ENCODE measurements at regions of chr2 and their contacts with region 1.

Region 1: GRCh38 chr2:234463626-234464290 is 33.1 kb downstream of the ARL4C start:
- DNase-seq: peak; percentile 31 to 86 (median 78)
- ATAC-seq: peak; percentile 86 to 93
- H3K4me3 Mint-ChIP-seq: peak overlapping the region; percentile 58 to 89 (median 84)
- H3K27ac Mint-ChIP-seq: peak overlapping the region; percentile 90 to 99 (median 96)
- H3K4me1 Mint-ChIP-seq: peaks cover 39 to 72% (median 67%) of the 10 kb centered on the region in 4 donors
- H3K27me3 Mint-ChIP-seq: no peaks in the 10 kb centered on the region

Region 2: DNA sequence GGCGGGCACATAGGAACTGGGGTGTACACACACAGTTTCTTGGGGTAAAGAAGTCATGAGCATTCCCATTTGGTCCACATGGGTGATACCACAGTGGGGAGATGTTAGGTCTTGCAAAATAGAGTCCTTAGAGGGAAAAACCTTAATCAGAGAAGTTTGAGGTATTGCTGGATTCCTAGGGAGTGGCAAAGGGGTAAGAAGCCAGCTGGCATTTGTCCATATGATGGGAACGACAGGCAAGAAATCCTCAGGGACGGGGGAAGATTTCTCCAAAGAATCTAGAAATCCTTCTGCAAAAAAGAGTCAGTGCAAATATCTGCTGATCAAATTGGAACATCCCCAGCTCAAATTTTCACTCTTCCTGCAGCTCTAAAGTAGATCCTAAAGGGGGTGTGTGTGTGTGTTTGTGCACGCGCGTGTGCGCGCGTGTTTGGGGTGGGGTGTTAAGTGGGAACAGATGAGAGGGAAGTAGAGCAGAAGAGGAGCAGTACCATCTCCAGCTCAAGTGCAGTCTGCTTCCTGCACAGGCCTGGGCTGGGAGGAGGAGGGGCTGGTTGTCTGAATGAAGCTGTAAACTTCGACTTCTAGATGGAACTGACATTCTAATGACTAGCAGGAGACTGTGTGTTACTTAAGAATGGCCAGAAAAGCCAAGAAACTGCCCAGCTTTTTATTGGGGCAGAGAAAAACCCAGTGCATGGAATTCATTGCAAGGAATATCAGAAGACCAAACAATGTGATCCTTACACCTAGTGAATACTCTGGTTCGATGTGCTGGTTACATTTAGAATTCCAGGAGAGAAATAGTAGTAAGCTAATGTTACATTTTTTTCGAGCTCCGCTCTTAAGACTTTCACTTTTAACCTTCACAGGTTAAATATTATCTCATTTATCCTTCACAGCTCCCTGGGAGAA is 245.2 kb before region 1 on chr2:
- POLR2A ChIA-PET with region 1: interaction called, 10 read pairs
- DNase-seq: peak in 3 of 10 donors; percentile 5 to 18 (median 14)
- ATAC-seq: peak in 1 of 2 donors; percentile 67
- H3K4me3 Mint-ChIP-seq: peak overlapping the region in 8 of 10 donors; percentile 36 to 75 (median 50)
- H3K27ac Mint-ChIP-seq: peak overlapping the region; percentile 17 to 83 (median 64)
- H3K4me1 Mint-ChIP-seq: peaks cover 28 to 47% (median 43%) of the 10 kb centered on the region in 4 donors
- H3K27me3 Mint-ChIP-seq: no peaks in the 10 kb centered on the region

Region 3: GRCh38 chr2:234395891-234396420 is 67.8 kb before region 1 on chr2:
- POLR2A ChIA-PET with region 1: no interaction called
- DNase-seq: no peak
- ATAC-seq: no peak
- H3K4me3 Mint-ChIP-seq: peak overlapping the region in 2 of 10 donors; percentile 22 to 45
- H3K27ac Mint-ChIP-seq: peak overlapping the region in 9 of 10 donors; percentile 8 to 88 (median 76)
- H3K4me1 Mint-ChIP-seq: peaks cover 28 to 78% (median 58%) of the 10 kb centered on the region in 4 donors
- H3K27me3 Mint-ChIP-seq: no peaks in the 10 kb centered on the region

Region 4: DNA sequence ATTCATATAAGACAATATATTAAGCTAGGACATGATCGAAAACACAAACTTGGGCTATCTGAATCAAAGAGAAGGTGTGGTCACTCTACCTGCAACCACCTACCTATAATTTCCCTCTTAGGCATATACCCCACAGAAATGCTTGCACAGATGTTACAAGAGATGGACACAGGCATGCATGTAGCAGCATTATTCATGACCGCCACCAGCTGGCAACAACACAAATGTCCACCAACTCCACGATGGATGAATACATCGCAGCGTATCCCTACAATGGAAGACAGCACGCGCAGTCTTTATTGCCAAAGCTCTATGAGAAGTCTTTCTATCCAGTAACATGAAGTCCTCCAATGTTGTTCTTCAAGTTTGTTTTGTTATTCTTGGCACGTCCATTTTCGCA is 57.7 kb before region 1 on chr2:
- POLR2A ChIA-PET with region 1: no interaction called
- DNase-seq: no peak
- ATAC-seq: no peak
- H3K4me3 Mint-ChIP-seq: no peak overlapping the region
- H3K27ac Mint-ChIP-seq: peak overlapping the region in 3 of 10 donors; percentile 11 to 65 (median 12)
- H3K4me1 Mint-ChIP-seq: peaks cover 10 to 38% (median 34%) of the 10 kb centered on the region in 4 donors
- H3K27me3 Mint-ChIP-seq: no peaks in the 10 kb centered on the region

Region 5: GRCh38 chr2:234446404-234447076 is 17.2 kb before region 1 on chr2:
- POLR2A ChIA-PET with region 1: interaction called, 235 read pairs
- DNase-seq: peak; percentile 36 to 91 (median 84)
- ATAC-seq: peak; percentile 65 to 87
- H3K4me3 Mint-ChIP-seq: peak overlapping the region; percentile 38 to 89 (median 80)
- H3K27ac Mint-ChIP-seq: peak overlapping the region; percentile 95 to 100 (median 99)
- H3K4me1 Mint-ChIP-seq: peaks cover 48 to 95% (median 90%) of the 10 kb centered on the region in 4 donors
- H3K27me3 Mint-ChIP-seq: no peaks in the 10 kb centered on the region

Region 6: GRCh38 chr2:234478121-234478858 is 14.5 kb after region 1 on chr2:
- POLR2A ChIA-PET with region 1: interaction called, 15 read pairs
- DNase-seq: no peak
- ATAC-seq: no peak
- H3K4me3 Mint-ChIP-seq: peak overlapping the region in 1 of 10 donors; percentile 4
- H3K27ac Mint-ChIP-seq: peak overlapping the region in 5 of 10 donors; percentile 40 to 57 (median 51)
- H3K4me1 Mint-ChIP-seq: peaks cover 18 to 59% (median 39%) of the 10 kb centered on the region in 4 donors
- H3K27me3 Mint-ChIP-seq: no peaks in the 10 kb centered on the region

Region 7: GRCh38 chr2:234488913-234489451 is 25.2 kb after region 1 on chr2:
- POLR2A ChIA-PET with region 1: interaction called, 11 read pairs
- DNase-seq: peak; percentile 40 to 88 (median 80)
- ATAC-seq: peak; percentile 75 to 82
- H3K4me3 Mint-ChIP-seq: peak overlapping the region; percentile 85 to 100 (median 90)
- H3K27ac Mint-ChIP-seq: peak overlapping the region; percentile 95 to 100 (median 99)
- H3K4me1 Mint-ChIP-seq: peaks cover 44 to 93% (median 85%) of the 10 kb centered on the region in 4 donors
- H3K27me3 Mint-ChIP-seq: no peaks in the 10 kb centered on the region

Region 8: GRCh38 chr2:234963773-234964615 is 500.2 kb after region 1 on chr2:
- POLR2A ChIA-PET with region 1: no interaction called
- DNase-seq: no peak
- ATAC-seq: no peak
- H3K4me3 Mint-ChIP-seq: no peak overlapping the region
- H3K27ac Mint-ChIP-seq: no peak overlapping the region
- H3K4me1 Mint-ChIP-seq: peaks cover 0 to 4% (median 0%) of the 10 kb centered on the region in 4 donors
- H3K27me3 Mint-ChIP-seq: peaks cover 2 to 10% (median 9%) of the 10 kb centered on the region in 5 donors

Measured in naive thymus-derived CD8-positive, alpha-beta T cell (primary cell).